T-cell (primary cell): ENCODE measurements at regions of chr11 and their contacts with region 1.

Region 1: DNA sequence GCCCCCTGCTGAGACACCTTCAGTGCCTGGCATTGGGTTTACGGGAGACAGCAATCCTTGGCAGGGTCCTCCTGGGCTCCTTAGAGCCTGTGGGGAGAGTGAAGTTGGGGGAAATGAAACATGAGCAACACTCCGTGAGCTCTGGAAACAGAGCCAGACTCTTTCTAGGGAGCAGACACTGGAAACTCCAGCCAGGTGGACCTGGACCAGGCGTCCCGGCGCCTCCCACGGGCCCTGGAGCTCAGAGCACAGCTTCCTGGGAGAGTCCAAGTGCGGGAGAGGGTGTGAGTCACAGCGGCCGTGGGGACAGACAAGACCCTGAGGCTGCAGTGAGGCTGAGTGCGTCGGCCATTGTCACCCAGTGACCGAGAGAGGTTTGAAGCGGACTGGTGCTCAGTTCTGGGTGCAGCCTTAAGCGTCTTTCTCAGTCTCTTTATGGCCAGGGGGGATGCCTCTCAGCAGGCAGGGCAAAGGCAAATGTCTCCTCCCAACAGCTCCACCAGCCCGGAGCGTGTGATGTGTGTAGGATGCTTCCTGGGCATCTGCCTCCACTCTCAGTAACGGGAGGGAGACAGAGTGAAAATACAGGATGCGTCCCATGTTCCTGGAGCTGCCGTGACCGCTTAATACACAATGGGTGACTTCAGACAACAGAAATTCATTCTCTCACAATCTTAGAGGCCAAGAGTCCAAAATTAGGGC is 399.2 kb downstream of the SHANK2 start:
- DNase-seq: no peak
- ATAC-seq: no peak
- H3K4me3 ChIP-seq: no peak overlapping the region
- H3K4me3 Mint-ChIP-seq: no peak overlapping the region
- H3K27ac ChIP-seq: no peak overlapping the region
- H3K27ac Mint-ChIP-seq: no peak overlapping the region
- H3K4me1 ChIP-seq: no peaks in the 10 kb centered on the region
- H3K4me1 Mint-ChIP-seq: no peaks in the 10 kb centered on the region
- H3K27me3 ChIP-seq: peaks cover 0 to 20% of the 10 kb centered on the region in 2 experiments
- H3K27me3 Mint-ChIP-seq: peaks cover 0 to 20% of the 10 kb centered on the region in 2 donors

Region 2: DNA sequence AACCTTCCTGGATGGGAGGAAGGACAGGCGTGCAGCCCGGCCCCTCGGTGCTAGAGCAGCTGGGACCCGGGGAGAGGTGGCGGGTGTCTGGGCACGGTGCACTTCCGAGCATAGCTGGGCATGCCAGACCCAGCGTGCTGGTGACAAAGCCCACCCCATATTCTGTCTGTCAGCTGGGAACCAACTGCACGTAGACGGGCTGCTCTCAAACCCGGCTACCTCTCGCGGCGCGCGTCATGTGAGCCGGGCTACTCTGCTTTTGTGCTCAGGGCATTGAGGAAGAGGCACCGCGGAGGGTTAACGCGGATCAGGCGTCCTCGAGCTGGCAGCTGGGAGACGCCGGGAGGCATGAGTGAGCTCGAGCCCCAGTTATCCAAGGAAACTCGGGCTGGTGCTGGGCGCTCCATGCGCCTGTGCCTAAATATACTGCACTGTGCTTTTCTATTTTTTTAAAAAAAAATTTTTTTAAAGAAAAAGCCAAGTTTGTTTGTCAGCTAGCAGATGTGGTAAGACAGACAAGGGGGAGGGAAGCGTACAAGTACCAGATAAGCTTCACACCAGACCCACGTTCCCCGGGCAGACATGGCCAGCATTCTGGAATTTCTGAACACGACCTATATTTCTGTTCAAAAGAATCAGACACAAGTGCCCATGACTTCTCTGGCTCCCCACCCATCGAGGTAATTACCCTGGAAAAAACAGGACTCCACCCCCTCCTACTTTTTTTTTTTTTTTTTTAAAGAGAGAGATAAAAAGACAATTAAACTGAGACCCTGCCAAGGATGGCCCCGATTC is 26.5 kb before region 1 on chr11:
- CTCF ChIA-PET with region 1: no interaction called
- POLR2A ChIA-PET with region 1: no interaction called
- DNase-seq: no peak
- ATAC-seq: no peak
- H3K4me3 ChIP-seq: no peak overlapping the region
- H3K4me3 Mint-ChIP-seq: no peak overlapping the region
- H3K27ac ChIP-seq: no peak overlapping the region
- H3K27ac Mint-ChIP-seq: no peak overlapping the region
- H3K4me1 ChIP-seq: no peaks in the 10 kb centered on the region
- H3K4me1 Mint-ChIP-seq: peaks cover 0 to 4% (median 2%) of the 10 kb centered on the region in 3 donors
- H3K27me3 ChIP-seq: peaks cover 12 to 45% of the 10 kb centered on the region in 2 experiments
- H3K27me3 Mint-ChIP-seq: peaks cover 29 to 44% of the 10 kb centered on the region in 2 donors

Region 3: GRCh38 chr11:70930215-70930614 is 77.0 kb after region 1 on chr11:
- CTCF ChIA-PET with region 1: no interaction called
- POLR2A ChIA-PET with region 1: interaction called in 1 of 2 experiments, 10 read pairs
- DNase-seq: no peak
- ATAC-seq: no peak
- H3K4me3 ChIP-seq: no peak overlapping the region
- H3K4me3 Mint-ChIP-seq: no peak overlapping the region
- H3K27ac ChIP-seq: no peak overlapping the region
- H3K27ac Mint-ChIP-seq: no peak overlapping the region
- H3K4me1 ChIP-seq: no peaks in the 10 kb centered on the region
- H3K4me1 Mint-ChIP-seq: no peaks in the 10 kb centered on the region
- H3K27me3 ChIP-seq: peaks cover 0 to 14% of the 10 kb centered on the region in 2 experiments
- H3K27me3 Mint-ChIP-seq: peaks cover 0 to 11% of the 10 kb centered on the region in 2 donors